AG04449 (cell line): ENCODE measurements at regions of chr5 and their contacts with region 1.

Region 1: GRCh38 chr5:136080483-136081216 is 51.9 kb downstream of the TGFBI start:
- DNase-seq: peak; percentile 77
- H3K4me3 ChIP-seq: peak overlapping the region; percentile 60
- CTCF ChIP-seq: no peak

Region 2: GRCh38 chr5:135887351-135887864 is 193.2 kb before region 1 on chr5:
- CTCF ChIA-PET with region 1: interaction called, 143 read pairs
- POLR2A ChIA-PET with region 1: no interaction called
- DNase-seq: peak; percentile 5
- H3K4me3 ChIP-seq: no peak overlapping the region
- CTCF ChIP-seq: peak; percentile 77

Region 3: GRCh38 chr5:135934939-135935338 is 145.7 kb before region 1 on chr5:
- CTCF ChIA-PET with region 1: interaction called, 71 read pairs
- POLR2A ChIA-PET with region 1: no interaction called
- DNase-seq: no peak
- H3K4me3 ChIP-seq: no peak overlapping the region
- CTCF ChIP-seq: no peak

Region 4: DNA sequence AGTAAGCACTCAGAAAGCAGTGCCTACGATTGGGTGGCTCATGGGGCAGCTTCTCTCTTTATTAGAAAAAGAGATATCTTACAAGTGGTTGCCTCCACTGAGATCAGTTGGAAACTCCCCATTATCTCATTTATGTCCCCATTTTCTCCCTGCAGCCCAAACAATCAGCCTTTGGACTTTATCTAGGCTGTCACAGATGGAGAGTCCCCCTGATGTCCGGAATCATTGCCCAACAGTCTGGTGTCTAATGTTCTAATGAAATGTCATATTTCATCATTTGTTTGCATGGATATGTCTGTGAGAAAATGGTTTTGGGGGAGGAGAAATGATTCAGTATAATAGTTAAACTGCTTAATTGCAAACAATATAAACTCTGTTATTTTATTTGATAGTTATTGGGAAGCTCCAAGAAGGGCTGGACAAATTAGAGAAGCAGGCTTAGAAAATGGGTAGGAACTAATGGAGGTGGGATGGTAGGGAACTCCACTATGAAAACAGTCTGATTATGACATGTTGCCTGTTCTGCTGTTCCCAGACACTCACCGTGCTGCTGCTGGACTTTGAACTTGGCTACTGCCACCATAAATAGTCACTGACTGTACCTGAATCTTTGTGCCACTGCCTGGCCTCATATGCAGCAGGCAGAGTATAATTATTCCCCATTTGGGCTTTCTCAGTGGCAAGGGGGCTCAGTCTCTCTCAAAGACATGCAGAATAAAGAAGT is 13.7 kb after region 1 on chr5:
- CTCF ChIA-PET with region 1: interaction called, 31 read pairs
- POLR2A ChIA-PET with region 1: no interaction called
- DNase-seq: no peak
- H3K4me3 ChIP-seq: no peak overlapping the region
- CTCF ChIP-seq: no peak

Region 5: GRCh38 chr5:136132557-136133221 is 52.0 kb after region 1 on chr5 and contains the start of gene SMAD5:
- CTCF ChIA-PET with region 1: interaction called, 13 read pairs
- POLR2A ChIA-PET with region 1: no interaction called
- DNase-seq: peak; percentile 63
- H3K4me3 ChIP-seq: peak within 1 kb of the TSS; percentile 66
- CTCF ChIP-seq: no peak